ENCODE measurements at regions of chr2 and their contacts with region 1.

Region 1: GRCh38 chr2:174039551-174040416 is 74.6 kb upstream of the SP3 start:
- DNase-seq: peak; percentile 95
- ATAC-seq: peak; percentile 95
- H3K4me3 Mint-ChIP-seq: peak overlapping the region; percentile 49
- H3K27ac Mint-ChIP-seq: peak overlapping the region; percentile 93
- H3K4me1 Mint-ChIP-seq: peaks cover 14% of the 10 kb centered on the region
- H3K27me3 Mint-ChIP-seq: peaks cover 1% of the 10 kb centered on the region
- CTCF ChIP-seq: peak; percentile 75

Region 2: DNA sequence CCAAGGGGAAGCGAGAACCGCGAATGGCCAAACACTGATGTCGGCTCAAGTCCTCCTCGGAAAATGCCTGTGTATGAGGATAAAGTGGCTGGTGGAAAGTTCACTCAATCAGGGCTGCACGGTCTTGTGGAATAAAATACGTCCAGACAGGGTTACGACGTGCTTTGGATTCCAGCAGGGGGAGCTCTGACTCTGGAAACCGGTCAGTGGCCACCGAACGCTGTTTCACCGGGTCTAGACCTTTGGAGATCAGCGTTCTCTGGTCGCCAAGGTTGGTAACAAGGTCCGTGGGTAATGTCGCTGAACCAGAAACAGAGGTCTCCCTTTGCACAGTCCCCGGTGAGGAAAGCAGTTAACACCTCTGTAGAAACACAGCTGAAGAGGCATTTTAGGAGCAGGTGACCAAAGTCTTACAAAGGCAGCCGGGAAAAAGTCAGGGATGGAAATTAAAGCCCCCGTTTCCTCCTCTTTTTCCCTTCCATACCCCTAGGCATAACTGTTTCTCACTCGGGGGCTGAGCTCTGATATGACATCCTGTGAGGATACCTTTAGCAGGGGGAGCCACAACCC is 637.3 kb before region 1 on chr2:
- CTCF ChIA-PET with region 1: interaction called, 3 read pairs
- POLR2A ChIA-PET with region 1: no interaction called
- intact Hi-C with region 1: loop called (anchors 5 kb)
- DNase-seq: peak; percentile 84
- ATAC-seq: peak; percentile 87
- H3K4me3 Mint-ChIP-seq: no peak overlapping the region
- H3K27ac Mint-ChIP-seq: no peak overlapping the region
- H3K4me1 Mint-ChIP-seq: peaks cover 4% of the 10 kb centered on the region
- H3K27me3 Mint-ChIP-seq: peaks cover 34% of the 10 kb centered on the region
- CTCF ChIP-seq: peak; percentile 81

Region 3: DNA sequence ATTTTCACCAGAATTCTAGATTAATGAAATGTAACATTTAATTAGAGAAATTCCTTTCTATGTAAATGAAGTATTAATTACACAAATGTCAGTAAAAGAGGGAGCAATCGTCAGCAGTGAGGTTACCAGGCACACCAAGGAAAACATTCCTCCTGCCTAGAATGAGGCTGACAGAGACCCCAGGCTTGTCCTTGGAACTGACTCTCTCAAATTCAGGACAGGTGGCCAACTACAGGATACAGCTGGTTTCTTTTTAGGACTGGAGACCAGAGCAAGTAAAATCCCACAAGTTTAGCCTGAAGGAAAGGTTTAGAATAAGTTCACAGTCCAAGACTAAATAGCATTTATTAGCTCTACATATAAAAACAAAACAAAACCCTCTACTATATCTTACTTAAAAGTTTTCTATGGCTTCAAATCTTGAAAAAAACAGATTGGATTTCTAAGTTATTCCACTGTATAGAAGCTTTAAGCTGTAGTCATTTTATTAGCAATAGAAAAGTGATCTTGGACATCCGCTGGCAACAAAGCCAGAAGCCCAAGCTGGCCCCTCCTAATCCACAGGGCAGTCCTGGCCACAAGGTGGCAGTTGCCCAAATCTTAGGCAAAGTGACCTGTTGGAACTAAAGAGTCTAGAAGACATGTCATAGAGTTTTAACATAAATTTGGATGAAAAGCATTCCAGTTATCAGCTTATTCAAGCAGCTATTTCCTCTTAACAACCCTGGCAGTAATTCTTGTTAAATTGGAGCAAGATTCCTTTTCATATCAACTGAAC is 155.6 kb before region 1 on chr2:
- CTCF ChIA-PET with region 1: interaction called, 3 read pairs
- POLR2A ChIA-PET with region 1: no interaction called
- intact Hi-C with region 1: loop called (anchors 10 kb)
- DNase-seq: peak; percentile 47
- ATAC-seq: peak; percentile 51
- H3K4me3 Mint-ChIP-seq: no peak overlapping the region
- H3K27ac Mint-ChIP-seq: no peak overlapping the region
- H3K4me1 Mint-ChIP-seq: no peaks in the 10 kb centered on the region
- H3K27me3 Mint-ChIP-seq: peaks cover 25% of the 10 kb centered on the region
- CTCF ChIP-seq: peak; percentile 18

Region 4: GRCh38 chr2:173965329-173966025 is 74.3 kb before region 1 on chr2 and contains the start of gene SP3:
- CTCF ChIA-PET with region 1: no interaction called
- POLR2A ChIA-PET with region 1: interaction called, 3 read pairs
- intact Hi-C with region 1: loop called (anchors 5 kb)
- DNase-seq: peak; percentile 96
- ATAC-seq: peak; percentile 76
- H3K4me3 Mint-ChIP-seq: peak within 1 kb of the TSS; percentile 88
- H3K27ac Mint-ChIP-seq: peak within 1 kb of the TSS; percentile 95
- H3K4me1 Mint-ChIP-seq: peaks cover 24% of the 10 kb centered on the region
- H3K27me3 Mint-ChIP-seq: no peaks in the 10 kb centered on the region
- CTCF ChIP-seq: no peak
- total RNA-seq, gene SP3: 80.5 to 84.0 TPM

Region 5: DNA sequence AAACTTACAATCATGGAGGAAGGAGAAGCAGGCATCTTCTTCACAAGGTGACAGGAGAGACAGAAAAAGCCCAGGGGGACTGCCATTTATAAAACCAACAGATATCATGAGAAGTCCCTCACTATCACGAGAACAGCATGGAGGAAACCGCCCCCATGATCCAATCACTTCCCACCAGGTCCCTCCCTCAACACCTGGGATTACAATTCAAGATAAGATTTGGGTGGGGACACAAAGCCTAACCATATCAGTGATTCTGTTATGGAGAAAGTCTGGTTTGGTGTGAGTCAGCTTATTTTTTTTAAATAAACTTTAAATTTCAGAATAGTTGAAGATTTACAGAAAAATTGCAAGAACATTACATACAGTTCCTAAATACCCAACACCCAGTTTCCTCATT is 10.1 kb after region 1 on chr2:
- CTCF ChIA-PET with region 1: no interaction called
- POLR2A ChIA-PET with region 1: no interaction called
- intact Hi-C with region 1: no loop called
- DNase-seq: no peak
- ATAC-seq: no peak
- H3K4me3 Mint-ChIP-seq: no peak overlapping the region
- H3K27ac Mint-ChIP-seq: no peak overlapping the region
- H3K4me1 Mint-ChIP-seq: no peaks in the 10 kb centered on the region
- H3K27me3 Mint-ChIP-seq: peaks cover 2% of the 10 kb centered on the region
- CTCF ChIP-seq: no peak

Region 6: GRCh38 chr2:174062934-174063333 is 23.1 kb after region 1 on chr2:
- CTCF ChIA-PET with region 1: no interaction called
- POLR2A ChIA-PET with region 1: no interaction called
- intact Hi-C with region 1: no loop called
- DNase-seq: no peak
- ATAC-seq: no peak
- H3K4me3 Mint-ChIP-seq: no peak overlapping the region
- H3K27ac Mint-ChIP-seq: no peak overlapping the region
- H3K4me1 Mint-ChIP-seq: no peaks in the 10 kb centered on the region
- H3K27me3 Mint-ChIP-seq: peaks cover 22% of the 10 kb centered on the region
- CTCF ChIP-seq: no peak

Region 7: GRCh38 chr2:174248187-174248997 is 208.6 kb after region 1 on chr2 and contains the start of gene OLA1:
- CTCF ChIA-PET with region 1: no interaction called
- POLR2A ChIA-PET with region 1: no interaction called
- intact Hi-C with region 1: no loop called
- DNase-seq: peak; percentile 96
- ATAC-seq: peak; percentile 99
- H3K4me3 Mint-ChIP-seq: peak within 1 kb of the TSS; percentile 83
- H3K27ac Mint-ChIP-seq: peak within 1 kb of the TSS; percentile 90
- H3K4me1 Mint-ChIP-seq: peaks cover 25% of the 10 kb centered on the region
- H3K27me3 Mint-ChIP-seq: no peaks in the 10 kb centered on the region
- CTCF ChIP-seq: no peak
- total RNA-seq, gene OLA1: 128 to 137 TPM